ENCODE measurements at regions of chr15 and their contacts with region 1.

Region 1: GRCh38 chr15:37933666-37934065 is 774 bp upstream of the TMCO5A start:
- DNase-seq: no peak
- ATAC-seq: peak in 1 of 8 donors; percentile 43
- H3K4me3 ChIP-seq: no peak overlapping the region
- H3K27ac ChIP-seq: no peak overlapping the region
- H3K4me1 ChIP-seq: no peaks in the 10 kb centered on the region
- H3K27me3 ChIP-seq: peaks cover 0 to 3% (median 0%) of the 10 kb centered on the region in 7 donors
- CTCF ChIP-seq: no peak

Region 2: GRCh38 chr15:37921527-37922385 is 11.9 kb before region 1 on chr15:
- intact Hi-C with region 1: loop called in 1 of 10 experiments (anchors 1 kb)
- DNase-seq: no peak
- ATAC-seq: no peak
- H3K4me3 ChIP-seq: no peak overlapping the region
- H3K27ac ChIP-seq: no peak overlapping the region
- H3K4me1 ChIP-seq: no peaks in the 10 kb centered on the region
- H3K27me3 ChIP-seq: peaks cover 0 to 12% (median 0%) of the 10 kb centered on the region in 7 donors
- CTCF ChIP-seq: no peak

Measured in heart right ventricle (tissue), 16 donors.